ENCODE measurements at regions of chr5 and their contacts with region 1.

Region 1: DNA sequence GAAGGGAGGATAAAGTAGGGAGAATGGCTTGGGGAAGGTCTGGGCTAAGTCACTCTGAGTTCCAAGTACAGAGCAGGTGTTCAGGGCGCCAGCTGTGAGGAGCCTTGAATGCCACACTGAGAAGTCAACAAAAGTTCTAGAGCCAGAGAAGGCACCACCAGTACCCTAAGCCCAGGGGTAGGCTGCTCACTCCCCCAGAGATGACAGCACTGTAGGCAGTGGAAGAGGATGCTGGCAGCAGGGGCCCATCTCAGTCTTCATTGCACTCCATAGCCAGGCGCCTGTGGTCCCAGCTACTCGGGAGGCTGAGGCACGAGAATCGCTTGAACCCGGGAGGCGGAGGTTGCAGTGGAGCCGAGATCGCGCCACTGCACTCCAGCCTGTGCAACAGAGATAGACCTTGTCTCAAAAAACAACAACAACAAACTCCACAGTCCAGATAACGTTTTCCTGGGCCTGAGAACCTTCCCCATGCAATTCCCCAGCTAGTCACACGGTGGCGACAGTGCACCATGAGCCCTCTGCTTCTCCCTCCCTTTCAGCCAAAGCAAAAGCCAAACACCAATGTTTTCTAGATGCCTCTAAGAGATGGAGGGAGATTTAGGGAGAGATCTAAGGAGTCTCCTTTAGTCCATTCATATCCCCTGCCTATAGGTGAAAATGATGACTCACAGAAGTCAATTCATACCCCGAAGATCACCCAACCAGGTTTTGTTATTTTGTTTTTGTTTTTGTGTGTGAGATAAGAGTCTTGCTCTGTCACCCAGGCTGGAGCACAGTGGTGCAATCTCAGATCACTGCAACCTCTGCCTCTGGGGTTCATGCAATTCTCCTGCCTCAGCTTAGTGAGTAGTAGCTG is 19.8 kb upstream of the NSD1 start:
- DNase-seq: no peak
- H3K4me3 ChIP-seq: no peak overlapping the region
- H3K27me3 ChIP-seq: no peaks in the 10 kb centered on the region
- CTCF ChIP-seq: peak; percentile 99

Region 2: DNA sequence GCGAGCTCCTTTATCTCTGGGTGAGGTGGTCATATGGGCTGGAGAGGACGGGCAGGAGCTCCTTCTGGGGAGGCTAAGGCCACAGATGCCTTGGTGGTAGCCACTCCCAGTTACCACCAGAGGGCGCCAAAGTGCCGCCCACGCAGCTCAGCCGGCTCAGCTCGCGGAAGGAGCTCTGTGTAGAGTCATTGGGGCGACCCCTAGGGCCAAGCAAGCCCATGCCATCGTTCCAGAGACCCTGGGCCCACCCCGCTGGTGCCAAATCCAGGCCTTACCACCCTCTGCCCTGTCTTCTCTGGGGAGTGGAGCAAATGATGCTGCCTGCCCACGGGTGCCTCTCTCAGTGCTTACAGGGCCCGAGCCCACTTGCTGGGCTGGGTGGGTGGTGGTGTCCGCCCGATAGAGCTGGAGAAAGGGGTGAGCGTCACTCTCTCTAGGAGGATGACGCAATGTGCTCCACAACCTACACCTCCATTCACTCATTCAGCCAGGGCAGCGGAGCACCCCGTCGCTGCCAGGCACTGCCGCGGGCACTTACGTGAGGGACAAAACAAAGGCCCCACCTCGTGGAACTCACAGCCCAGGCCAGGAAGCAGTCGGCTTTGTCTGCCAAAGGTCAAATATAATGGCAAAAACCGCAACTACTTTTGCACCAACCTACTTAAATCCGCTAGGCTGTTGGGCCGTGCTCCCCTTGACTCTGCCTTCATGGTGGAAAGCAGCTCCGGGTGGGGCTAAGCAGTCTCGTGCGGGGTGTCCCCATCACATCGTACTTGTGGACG is 452.7 kb before region 1 on chr5:
- CTCF ChIA-PET with region 1: interaction called, 98 read pairs
- POLR2A ChIA-PET with region 1: no interaction called
- DNase-seq: no peak
- H3K4me3 ChIP-seq: no peak overlapping the region
- H3K27me3 ChIP-seq: peaks cover 20% of the 10 kb centered on the region
- CTCF ChIP-seq: peak; percentile 99

Region 3: DNA sequence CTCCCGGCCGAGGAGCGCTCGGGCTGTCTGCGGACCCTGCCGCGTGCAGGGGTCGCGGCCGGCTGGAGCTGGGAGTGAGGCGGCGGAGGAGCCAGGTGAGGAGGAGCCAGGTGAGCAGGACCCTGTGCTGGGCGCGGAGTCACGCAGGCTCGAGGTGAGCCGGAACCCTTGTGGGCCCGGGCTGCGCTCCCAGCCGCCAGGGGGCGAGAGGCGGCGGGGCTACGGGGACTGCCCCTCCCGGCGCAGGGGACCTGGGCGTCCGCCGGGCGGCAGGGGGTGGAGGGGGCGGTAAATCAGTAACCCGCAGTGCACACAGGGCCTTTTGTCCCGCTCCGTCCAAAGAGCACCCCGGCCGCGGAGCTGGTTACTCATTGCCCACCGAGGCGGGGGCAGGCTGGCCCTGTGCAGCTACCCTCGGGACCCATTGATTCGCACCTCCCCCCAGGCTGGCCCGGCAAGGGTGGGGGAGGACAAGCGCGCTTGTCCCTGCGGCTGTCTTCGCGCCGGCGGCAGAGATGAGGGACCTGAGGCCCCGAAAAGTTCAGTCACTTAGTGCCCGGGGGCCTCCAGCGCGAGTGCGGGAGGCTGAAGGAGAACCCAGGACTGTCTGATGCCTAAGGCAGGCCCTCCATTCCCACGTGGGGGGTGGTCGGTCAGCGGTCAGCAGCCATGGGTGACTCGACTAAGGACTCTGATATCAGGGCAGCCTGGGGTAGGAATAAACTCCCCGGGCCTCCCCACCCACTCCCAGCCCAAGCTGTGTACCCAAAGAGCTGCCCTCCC is 26.7 kb before region 1 on chr5:
- CTCF ChIA-PET with region 1: interaction called, 33 read pairs
- POLR2A ChIA-PET with region 1: no interaction called
- DNase-seq: no peak
- H3K4me3 ChIP-seq: peak overlapping the region; percentile 40
- H3K27me3 ChIP-seq: peaks cover 14% of the 10 kb centered on the region; the same call in 1 of the 2 replicates
- CTCF ChIP-seq: peak; percentile 40

Region 4: GRCh38 chr5:177133091-177133852 is 19.5 kb after region 1 on chr5 and contains the start of gene NSD1:
- CTCF ChIA-PET with region 1: interaction called, 33 read pairs
- POLR2A ChIA-PET with region 1: no interaction called
- DNase-seq: no peak
- H3K4me3 ChIP-seq: peak within 1 kb of the TSS; percentile 64
- H3K27me3 ChIP-seq: no peaks in the 10 kb centered on the region
- CTCF ChIP-seq: no peak
- polyA plus RNA-seq, gene NSD1: 15.8 and 21.4 TPM in 2 replicates

Region 5: DNA sequence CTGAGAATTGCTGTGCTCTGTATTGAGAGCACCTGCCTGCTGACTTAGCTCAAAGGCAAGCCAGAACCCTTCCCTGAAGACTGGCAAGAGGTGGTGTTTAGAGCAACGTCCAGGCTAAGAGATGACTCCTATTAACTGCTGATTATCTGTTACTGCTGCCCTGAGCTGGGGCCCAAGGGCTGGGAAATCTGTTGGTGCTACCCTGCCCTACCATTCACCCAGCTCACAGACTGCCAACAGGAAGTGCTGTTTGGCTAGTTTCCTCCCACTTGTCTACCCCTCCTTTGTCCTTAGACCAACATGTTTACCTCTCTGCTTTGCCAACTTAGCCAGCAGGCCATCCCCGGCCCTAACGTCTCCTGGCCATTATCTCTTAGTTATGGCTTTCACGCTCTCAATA is 182.8 kb after region 1 on chr5:
- CTCF ChIA-PET with region 1: interaction called, 84 read pairs
- POLR2A ChIA-PET with region 1: no interaction called
- DNase-seq: no peak
- H3K4me3 ChIP-seq: no peak overlapping the region
- H3K27me3 ChIP-seq: no peaks in the 10 kb centered on the region
- CTCF ChIP-seq: no peak

Region 6: DNA sequence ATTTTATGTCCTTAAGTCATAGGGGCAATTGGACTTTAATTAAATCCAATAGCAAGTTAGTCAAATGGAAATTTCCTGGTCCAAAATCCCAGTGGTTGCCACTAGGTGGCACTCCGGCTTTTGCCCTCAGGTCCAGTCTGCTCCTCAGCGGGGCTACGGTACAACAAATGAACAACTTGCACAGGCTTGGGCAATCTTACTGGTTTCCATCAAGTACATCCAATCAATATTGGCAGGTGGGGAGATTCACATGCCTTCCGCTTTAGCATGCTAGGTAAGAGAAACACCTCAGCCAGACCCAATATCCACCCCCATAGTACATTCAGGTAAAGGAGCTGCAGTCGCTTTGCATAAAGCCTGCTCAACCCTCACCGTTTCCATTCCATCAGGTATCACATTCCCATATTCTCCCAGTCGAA is 204.2 kb after region 1 on chr5:
- CTCF ChIA-PET with region 1: interaction called, 11 read pairs
- POLR2A ChIA-PET with region 1: no interaction called
- DNase-seq: no peak
- H3K4me3 ChIP-seq: no peak overlapping the region
- H3K27me3 ChIP-seq: no peaks in the 10 kb centered on the region
- CTCF ChIP-seq: peak; percentile 92

Region 7: GRCh38 chr5:178902841-178903240 is 1789.0 kb after region 1 on chr5:
- CTCF ChIA-PET with region 1: no interaction called
- POLR2A ChIA-PET with region 1: no interaction called
- DNase-seq: no peak
- H3K4me3 ChIP-seq: no peak overlapping the region
- H3K27me3 ChIP-seq: no peaks in the 10 kb centered on the region
- CTCF ChIP-seq: no peak

Measured in BJ (cell line).